Head of caudate nucleus (tissue), 42 donors: ENCODE measurements at regions of chr10 and their contacts with region 1.

Region 1: DNA sequence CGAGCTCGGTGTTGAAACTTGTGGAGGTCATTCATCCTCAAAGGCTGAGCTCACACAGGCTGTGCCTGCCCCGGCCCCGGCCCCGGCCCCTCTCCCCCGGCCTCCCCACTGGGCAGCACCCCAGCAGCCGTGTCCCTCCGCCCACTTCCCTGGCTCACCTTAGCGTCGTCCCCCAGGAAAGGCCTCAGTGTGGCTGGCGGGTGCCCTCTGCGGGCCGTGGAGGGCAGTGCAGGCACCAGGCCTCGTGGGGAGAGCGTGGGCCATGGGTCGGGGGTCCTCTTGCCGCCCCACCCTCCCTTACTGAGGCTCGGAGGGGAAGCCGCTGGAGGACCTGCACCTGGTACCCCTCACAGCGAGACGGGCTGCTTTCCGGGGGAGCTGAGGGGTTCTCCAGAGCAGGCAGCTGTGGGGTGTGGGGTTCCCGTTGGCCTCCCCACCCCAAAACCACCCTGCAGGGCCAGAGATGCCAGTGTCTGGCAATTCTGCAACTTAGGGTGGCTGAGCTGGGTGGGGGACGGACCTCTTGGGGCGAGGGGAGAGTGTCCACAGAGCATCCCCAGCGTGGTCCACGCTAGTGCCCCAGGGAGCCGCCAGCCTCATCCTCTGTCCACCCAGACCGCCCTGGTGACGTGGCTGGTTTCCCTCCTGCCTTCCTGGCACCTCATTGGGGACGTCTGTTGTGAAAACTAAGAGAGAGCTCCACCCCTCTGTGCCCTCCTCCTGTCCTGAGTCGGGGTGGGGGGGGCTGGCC is 44.2 kb upstream of the DPYSL4 start:
- DNase-seq: peak in 38 of 42 donors; percentile 31 to 81 (median 60)

Region 2: DNA sequence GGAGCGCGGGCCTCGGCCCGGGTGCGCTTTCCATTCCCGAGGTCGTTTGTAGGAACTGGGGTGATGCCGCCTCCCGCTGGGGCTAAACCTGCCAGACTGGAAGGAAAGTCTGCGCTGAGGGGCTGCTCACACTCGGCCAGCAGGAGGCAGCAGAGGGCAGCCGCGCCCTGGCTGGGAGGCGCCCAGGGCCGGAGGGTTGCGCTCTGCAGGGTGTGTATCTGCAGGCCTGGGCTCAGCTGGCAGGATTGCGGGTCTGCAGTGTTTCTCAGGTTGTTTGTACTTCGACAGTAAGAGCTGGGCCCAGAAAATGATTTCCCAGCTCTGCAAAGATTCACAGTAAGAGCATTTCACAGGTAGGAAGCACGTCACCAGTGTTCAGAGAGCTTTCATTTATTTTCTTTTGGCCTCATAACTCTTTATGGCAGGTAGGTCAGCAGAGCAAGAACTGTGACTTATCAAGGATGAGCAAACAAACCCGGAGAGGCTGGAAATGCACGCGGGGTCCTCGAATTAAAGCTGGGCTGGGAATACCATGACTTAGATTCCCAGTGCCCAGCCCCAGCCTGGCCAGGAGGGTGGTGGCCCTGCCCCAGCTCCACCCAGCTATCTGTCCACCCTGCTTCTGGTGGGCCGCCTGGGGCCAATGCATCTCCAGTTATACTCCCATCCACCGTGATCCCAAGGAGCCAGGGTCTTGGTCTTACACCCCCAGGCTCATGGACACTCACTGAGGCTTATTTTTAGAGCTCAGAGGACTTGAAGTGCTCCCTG is 257.0 kb before region 1 on chr10:
- intact Hi-C with region 1: loop called (anchors 10 kb)
- DNase-seq: peak in 40 of 42 donors; percentile 34 to 87 (median 67)

Region 3: GRCh38 chr10:132257271-132257670 is 114.7 kb after region 1 on chr10:
- intact Hi-C with region 1: no loop called
- DNase-seq: peak in 32 of 42 donors; percentile 30 to 86 (median 68)

Region 4: DNA sequence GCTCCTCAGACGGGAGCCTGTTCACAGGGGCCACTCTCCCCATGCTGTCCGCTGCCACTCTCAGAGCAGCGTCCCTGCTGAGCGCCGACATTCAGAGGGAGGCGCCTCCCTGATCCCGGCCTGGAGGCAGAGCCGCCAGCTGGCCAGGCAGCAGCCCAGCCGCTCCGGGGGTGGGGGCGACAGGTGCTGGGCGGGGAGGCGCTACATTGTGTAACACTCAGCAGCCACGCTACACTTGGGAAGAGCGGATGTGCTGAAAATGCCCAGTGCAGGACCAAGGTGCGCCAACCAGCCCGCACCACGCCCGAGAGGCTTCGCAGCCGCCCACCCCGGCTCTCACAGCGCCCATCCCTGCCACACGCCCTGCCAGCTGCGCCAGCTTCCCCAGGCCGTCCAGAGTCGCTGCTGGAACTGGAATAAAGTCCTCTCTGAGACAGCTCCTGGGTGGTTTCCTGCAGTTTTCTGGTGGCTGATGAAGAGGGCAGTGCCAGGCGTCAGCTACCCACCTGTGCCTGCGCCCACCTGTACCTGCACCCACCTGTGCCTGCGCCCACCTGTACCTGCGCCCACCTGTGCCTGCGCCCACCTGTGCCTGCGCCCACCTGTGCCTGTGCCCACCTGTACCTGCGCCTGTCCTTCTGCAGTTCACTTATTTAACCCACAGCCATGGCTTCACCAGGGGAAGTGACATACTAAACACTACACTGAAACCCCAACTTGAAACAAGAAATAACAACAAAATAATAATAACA is 139.5 kb after region 1 on chr10:
- intact Hi-C with region 1: no loop called
- DNase-seq: no peak